ENCODE measurements at regions of chr5 and their contacts with region 1.

Region 1: GRCh38 chr5:35799753-35800152 is 56.9 kb upstream of the IL7R start:
- DNase-seq: no peak

Region 2: GRCh38 chr5:34941936-34942335 is 857.8 kb before region 1 on chr5:
- intact Hi-C with region 1: loop called in 1 of 2 experiments (anchors 5 kb)
- DNase-seq: no peak